Transverse colon (tissue), 4 donors: ENCODE measurements at regions of chr2 and their contacts with region 1.

Region 1: GRCh38 chr2:80670763-80671162 is 366.2 kb upstream of the LRRTM1 start:
- DNase-seq: no peak
- H3K4me3 ChIP-seq: no peak overlapping the region
- H3K27ac ChIP-seq: no peak overlapping the region
- H3K4me1 ChIP-seq: no peaks in the 10 kb centered on the region
- H3K27me3 ChIP-seq: no peaks in the 10 kb centered on the region
- CTCF ChIP-seq: no peak
- EP300 ChIP-seq: no peak
- POLR2A ChIP-seq: no peak

Region 2: DNA sequence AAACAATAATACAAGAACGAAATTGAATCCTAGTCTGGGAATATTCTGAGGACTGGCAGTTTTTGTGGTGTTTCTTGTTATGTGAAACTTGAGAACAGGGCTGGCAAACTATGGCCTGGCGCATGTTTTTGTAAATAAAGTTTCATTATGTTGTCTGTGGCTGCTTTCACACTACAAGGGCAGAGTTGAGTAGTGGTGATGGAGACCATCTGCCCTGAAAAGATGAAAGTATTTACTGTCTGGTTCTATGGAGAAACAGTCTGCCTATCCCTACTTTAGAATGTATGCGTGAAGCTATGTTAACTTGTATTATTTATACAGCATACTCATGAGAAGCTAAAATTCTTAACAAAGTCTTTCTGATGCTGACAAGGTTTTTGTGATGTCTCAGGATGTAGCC is 718.1 kb before region 1 on chr2:
- in situ Hi-C with region 1: no loop called
- intact Hi-C with region 1: no loop called
- DNase-seq: no peak
- H3K4me3 ChIP-seq: no peak overlapping the region
- H3K27ac ChIP-seq: no peak overlapping the region
- H3K4me1 ChIP-seq: no peaks in the 10 kb centered on the region
- H3K27me3 ChIP-seq: no peaks in the 10 kb centered on the region
- CTCF ChIP-seq: no peak
- EP300 ChIP-seq: no peak
- POLR2A ChIP-seq: no peak

Region 3: GRCh38 chr2:80778704-80779103 is 107.9 kb after region 1 on chr2:
- in situ Hi-C with region 1: no loop called
- intact Hi-C with region 1: no loop called
- DNase-seq: no peak
- H3K4me3 ChIP-seq: no peak overlapping the region
- H3K27ac ChIP-seq: no peak overlapping the region
- H3K4me1 ChIP-seq: no peaks in the 10 kb centered on the region
- H3K27me3 ChIP-seq: no peaks in the 10 kb centered on the region
- CTCF ChIP-seq: no peak
- EP300 ChIP-seq: no peak
- POLR2A ChIP-seq: no peak

Region 4: GRCh38 chr2:81876624-81877023 is 1205.9 kb after region 1 on chr2:
- in situ Hi-C with region 1: no loop called
- intact Hi-C with region 1: loop called (anchors 5 kb)
- DNase-seq: no peak
- H3K4me3 ChIP-seq: no peak overlapping the region
- H3K27ac ChIP-seq: no peak overlapping the region
- H3K4me1 ChIP-seq: no peaks in the 10 kb centered on the region
- H3K27me3 ChIP-seq: no peaks in the 10 kb centered on the region
- CTCF ChIP-seq: no peak
- EP300 ChIP-seq: no peak
- POLR2A ChIP-seq: no peak